Activated B cell treated with CpG ODN at 0.5 μM for 24 hours (primary cell): ENCODE measurements at regions of chr1 and their contacts with region 1.

Region 1: GRCh38 chr1:21782868-21783678 is at the start of gene USP48:
- DNase-seq: peak; percentile 97
- ATAC-seq: peak; percentile 78
- H3K4me3 Mint-ChIP-seq: peak within 1 kb of the TSS; percentile 90
- H3K27ac Mint-ChIP-seq: peak within 1 kb of the TSS; percentile 100
- H3K4me1 Mint-ChIP-seq: peaks cover 30% of the 10 kb centered on the region
- H3K27me3 Mint-ChIP-seq: no peaks in the 10 kb centered on the region
- CTCF ChIP-seq: no peak
- total RNA-seq, gene USP48: 86.3 and 97.3 TPM in 2 replicates

Region 2: GRCh38 chr1:21703318-21703963 is 79.6 kb before region 1 on chr1:
- CTCF ChIA-PET with region 1: interaction called, 10 read pairs
- POLR2A ChIA-PET with region 1: interaction called, 7 read pairs
- intact Hi-C with region 1: loop called (anchors 1 kb)
- DNase-seq: no peak
- ATAC-seq: no peak
- H3K4me3 Mint-ChIP-seq: no peak overlapping the region
- H3K27ac Mint-ChIP-seq: no peak overlapping the region
- H3K4me1 Mint-ChIP-seq: peaks cover 11% of the 10 kb centered on the region
- H3K27me3 Mint-ChIP-seq: no peaks in the 10 kb centered on the region
- CTCF ChIP-seq: no peak

Region 3: DNA sequence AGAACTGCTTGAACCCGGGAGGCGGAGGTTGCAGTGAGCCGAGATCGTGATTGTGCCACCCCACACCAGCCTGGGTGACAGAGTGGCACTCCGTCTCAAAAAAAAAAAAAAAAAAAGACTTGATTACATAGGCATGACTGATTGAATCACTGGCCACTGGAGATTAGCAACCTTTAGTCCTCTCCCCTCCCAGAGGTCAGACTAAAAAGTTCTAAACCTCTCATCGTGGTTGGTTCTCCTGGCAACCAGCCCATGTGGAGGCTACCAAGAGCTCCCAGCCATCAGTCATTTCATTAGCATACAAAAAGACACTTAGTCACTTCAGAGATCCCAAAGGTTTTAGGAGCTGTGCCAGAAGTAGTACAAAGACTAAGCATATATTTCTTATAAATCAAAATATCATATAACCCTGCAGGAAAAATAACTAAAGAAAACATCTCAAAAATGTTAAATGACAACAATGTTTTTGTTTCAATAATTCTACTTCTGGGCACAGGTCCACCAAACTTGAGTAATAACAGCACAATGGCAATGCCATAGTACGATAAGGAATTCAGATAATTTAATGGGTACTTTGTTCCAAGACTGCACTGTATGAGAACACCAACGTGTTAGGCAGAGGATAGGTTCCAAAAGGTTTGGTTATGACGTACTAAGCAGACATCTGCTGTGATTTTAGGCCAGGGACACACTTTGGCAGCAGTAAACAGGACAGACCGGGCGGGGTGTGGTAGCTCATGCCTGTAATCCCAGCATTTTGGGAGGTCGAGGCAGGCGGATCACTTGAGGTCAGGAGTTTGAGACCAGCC is 18.3 kb before region 1 on chr1:
- CTCF ChIA-PET with region 1: interaction called, 9 read pairs
- POLR2A ChIA-PET with region 1: interaction called, 96 read pairs
- intact Hi-C with region 1: loop called (anchors 1 kb)
- DNase-seq: no peak
- ATAC-seq: no peak
- H3K4me3 Mint-ChIP-seq: no peak overlapping the region
- H3K27ac Mint-ChIP-seq: peak overlapping the region; percentile 57
- H3K4me1 Mint-ChIP-seq: peaks cover 75% of the 10 kb centered on the region
- H3K27me3 Mint-ChIP-seq: no peaks in the 10 kb centered on the region
- CTCF ChIP-seq: no peak

Region 4: DNA sequence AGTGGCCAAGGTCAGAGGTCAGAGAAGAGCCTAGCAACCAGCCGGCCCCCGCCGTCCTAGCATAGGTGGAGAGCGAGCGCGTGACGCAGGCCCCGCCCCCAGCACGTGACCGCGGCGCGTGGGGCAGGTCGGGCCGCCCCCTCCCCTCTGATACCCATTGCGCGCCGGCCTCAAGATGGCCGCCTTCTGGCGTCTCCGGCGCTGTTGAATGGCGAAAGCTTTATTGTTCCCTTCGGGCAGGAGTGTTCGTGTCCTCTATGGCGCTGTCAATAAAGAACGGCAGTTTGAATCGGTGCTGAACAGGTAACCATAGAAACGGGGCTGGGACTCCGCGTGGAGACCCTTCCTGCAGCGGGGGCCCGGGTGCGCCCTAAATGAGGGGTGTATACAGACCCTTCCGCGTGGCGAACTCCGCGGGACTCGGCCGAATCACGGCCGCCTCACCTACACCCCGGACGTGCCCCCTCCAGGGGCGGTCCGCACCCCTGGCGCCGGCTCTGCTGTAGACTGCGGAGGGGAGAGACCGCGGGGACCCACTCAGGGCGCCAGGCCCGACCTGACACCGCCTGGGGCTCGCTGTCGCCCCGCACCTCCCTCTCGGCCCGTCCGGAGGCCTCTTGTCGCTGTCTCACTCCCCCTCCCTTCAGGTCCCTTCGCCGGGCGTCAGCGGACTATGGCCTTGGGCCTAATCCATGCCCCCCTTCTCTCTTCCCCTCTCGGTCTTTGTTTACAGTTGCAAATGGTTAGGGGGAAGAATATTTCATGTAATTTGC is 668.8 kb after region 1 on chr1 and contains the start of gene ZBTB40:
- CTCF ChIA-PET with region 1: no interaction called
- POLR2A ChIA-PET with region 1: interaction called, 4 read pairs
- intact Hi-C with region 1: loop called (anchors 2 kb)
- DNase-seq: peak; percentile 92
- ATAC-seq: peak; percentile 94
- H3K4me3 Mint-ChIP-seq: peak within 1 kb of the TSS; percentile 90
- H3K27ac Mint-ChIP-seq: peak within 1 kb of the TSS; percentile 82
- H3K4me1 Mint-ChIP-seq: peaks cover 34% of the 10 kb centered on the region
- H3K27me3 Mint-ChIP-seq: no peaks in the 10 kb centered on the region
- CTCF ChIP-seq: no peak
- total RNA-seq, gene ZBTB40: 32.5 and 36.2 TPM in 2 replicates